ENCODE measurements at regions of chr15 and their contacts with region 1.

Region 1: DNA sequence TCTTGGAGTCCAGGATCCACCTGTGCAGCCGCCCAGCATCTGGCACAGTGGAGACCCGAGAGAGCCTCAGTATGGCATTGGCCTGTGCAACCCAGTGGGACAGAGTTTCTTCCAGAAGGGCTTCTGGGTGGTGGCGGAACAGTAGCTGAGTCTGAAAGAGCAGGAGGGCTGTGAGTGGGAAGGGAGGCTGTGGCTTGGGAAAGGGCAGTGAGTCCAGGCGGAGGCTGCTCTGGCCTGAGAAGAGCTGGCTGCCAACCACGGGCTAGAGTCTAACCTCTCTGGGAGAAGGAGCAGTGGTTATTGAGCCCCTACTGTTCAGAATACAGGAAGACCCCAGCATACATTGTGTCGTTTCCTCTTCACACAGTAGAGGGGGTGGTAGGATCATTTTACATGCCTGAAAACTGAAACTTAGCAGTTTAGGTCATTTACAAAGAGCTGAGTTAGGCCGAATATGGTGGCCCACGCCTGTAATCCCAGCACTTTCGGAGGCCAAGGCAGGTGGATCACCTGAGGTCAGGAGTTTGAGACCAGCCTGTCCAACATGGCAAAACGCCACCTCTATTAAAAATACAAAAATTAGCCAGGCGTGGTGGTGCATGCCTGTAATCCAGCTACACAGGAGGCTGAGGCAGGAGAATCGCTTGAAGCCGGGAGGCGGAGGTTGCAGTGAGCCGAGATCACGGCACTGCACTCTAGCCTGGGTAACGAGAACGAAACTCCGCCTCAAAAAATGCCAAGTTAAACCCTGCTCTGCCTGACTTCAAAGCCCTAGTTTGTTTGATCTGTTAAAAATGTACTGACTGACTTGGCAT is 3.2 kb downstream of the AEN start:
- DNase-seq: peak; percentile 68
- H3K4me3 Mint-ChIP-seq: peak overlapping the region; percentile 91
- H3K27ac Mint-ChIP-seq: peak overlapping the region; percentile 95
- H3K4me1 Mint-ChIP-seq: peaks cover 82% of the 10 kb centered on the region
- H3K27me3 Mint-ChIP-seq: peaks cover 4% of the 10 kb centered on the region

Region 2: GRCh38 chr15:88635318-88635717 is 11.0 kb after region 1 on chr15:
- CTCF ChIA-PET with region 1: interaction called, 23 read pairs
- DNase-seq: peak; percentile 62
- H3K4me3 Mint-ChIP-seq: peak overlapping the region; percentile 74
- H3K27ac Mint-ChIP-seq: peak overlapping the region; percentile 91
- H3K4me1 Mint-ChIP-seq: peaks cover 91% of the 10 kb centered on the region
- H3K27me3 Mint-ChIP-seq: no peaks in the 10 kb centered on the region

Region 3: DNA sequence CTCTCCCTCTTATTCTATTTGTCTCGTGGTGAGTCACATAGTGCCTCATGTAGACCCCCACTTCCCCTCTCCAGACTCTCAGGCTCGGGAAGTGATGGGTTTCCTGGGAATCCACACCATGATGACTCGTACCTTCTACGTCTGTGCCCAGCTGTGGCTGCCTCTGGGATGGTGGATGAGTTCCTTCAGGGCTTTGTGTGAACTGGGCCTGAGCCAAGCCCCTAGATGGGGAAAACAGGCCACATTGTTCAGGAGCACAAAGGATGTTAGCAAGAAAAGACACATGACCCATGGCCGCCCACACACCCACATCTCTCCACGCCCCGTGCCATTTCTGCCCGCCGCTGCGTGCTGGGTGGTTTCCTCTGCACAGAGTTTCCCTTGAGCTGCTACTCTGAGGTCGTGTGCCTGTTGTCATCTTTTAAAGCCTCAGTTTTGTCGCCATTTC is 24.9 kb after region 1 on chr15:
- CTCF ChIA-PET with region 1: interaction called, 14 read pairs
- DNase-seq: peak; percentile 72
- H3K4me3 Mint-ChIP-seq: peak overlapping the region; percentile 35
- H3K27ac Mint-ChIP-seq: peak overlapping the region; percentile 90
- H3K4me1 Mint-ChIP-seq: peaks cover 72% of the 10 kb centered on the region
- H3K27me3 Mint-ChIP-seq: no peaks in the 10 kb centered on the region

Region 4: GRCh38 chr15:88658972-88659931 is 34.9 kb after region 1 on chr15:
- CTCF ChIA-PET with region 1: interaction called, 39 read pairs
- DNase-seq: no peak
- H3K4me3 Mint-ChIP-seq: no peak overlapping the region
- H3K27ac Mint-ChIP-seq: no peak overlapping the region
- H3K4me1 Mint-ChIP-seq: peaks cover 25% of the 10 kb centered on the region
- H3K27me3 Mint-ChIP-seq: no peaks in the 10 kb centered on the region

Region 5: DNA sequence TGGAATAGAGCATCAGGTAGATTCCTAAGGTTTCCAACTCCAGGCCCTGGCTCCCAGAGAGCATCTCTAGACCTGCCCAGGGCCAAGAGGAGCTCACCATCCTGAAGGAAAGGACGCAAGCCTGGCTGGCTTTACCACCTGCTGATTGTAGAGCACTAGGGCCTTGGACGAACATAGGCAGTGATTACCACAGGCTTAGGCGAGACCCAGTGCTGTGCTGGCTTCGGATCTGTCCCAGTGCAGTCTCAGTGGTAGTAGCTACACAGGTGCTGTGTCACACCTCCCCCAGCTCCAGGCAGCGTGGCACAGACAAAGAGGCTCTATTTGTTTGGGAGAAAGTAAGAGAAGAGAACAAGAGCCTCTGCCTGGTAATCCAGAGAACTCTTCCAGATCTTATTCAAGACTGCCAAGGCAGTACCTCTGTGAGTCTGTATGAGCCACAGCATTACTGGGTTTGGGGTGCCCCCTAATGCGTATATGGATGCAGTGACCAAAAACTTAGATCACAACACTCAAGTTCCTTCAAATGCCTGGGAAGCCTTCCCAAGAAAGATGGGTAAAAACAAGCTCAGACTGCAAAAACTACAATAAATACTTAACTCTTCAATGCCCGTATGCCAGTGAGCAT is 39.9 kb after region 1 on chr15:
- CTCF ChIA-PET with region 1: interaction called, 39 read pairs
- DNase-seq: peak; percentile 72
- H3K4me3 Mint-ChIP-seq: no peak overlapping the region
- H3K27ac Mint-ChIP-seq: no peak overlapping the region
- H3K4me1 Mint-ChIP-seq: peaks cover 5% of the 10 kb centered on the region
- H3K27me3 Mint-ChIP-seq: peaks cover 10% of the 10 kb centered on the region

Region 6: DNA sequence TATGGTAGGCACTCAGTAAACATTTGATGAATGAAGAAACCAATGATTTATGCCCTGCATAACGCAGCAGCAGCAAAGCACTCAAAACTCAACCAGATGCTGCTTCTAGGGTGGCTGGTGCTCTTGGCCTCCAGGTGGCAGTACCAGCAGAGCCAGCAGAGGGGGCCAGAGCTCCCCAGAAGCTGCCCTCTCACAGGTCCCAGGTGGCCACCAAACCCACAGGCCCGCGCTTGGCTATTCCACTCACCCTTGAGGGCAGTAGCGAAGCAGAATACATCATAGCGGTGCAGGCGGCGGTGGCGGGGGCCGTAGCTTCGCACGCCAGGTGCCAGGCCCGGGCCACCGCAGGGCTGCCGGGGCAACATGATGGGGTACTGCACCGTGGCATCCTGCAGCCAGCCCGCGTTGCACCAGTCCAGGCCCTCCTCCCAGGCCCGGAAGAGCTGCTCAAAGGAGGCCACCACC is 254.4 kb after region 1 on chr15:
- CTCF ChIA-PET with region 1: interaction called, 14 read pairs
- DNase-seq: peak; percentile 69
- H3K4me3 Mint-ChIP-seq: no peak overlapping the region
- H3K27ac Mint-ChIP-seq: no peak overlapping the region
- H3K4me1 Mint-ChIP-seq: no peaks in the 10 kb centered on the region
- H3K27me3 Mint-ChIP-seq: no peaks in the 10 kb centered on the region

Region 7: GRCh38 chr15:88904624-88905327 is 280.4 kb after region 1 on chr15:
- CTCF ChIA-PET with region 1: interaction called, 12 read pairs
- DNase-seq: peak; percentile 98
- H3K4me3 Mint-ChIP-seq: peak overlapping the region; percentile 42
- H3K27ac Mint-ChIP-seq: peak overlapping the region; percentile 94
- H3K4me1 Mint-ChIP-seq: peaks cover 43% of the 10 kb centered on the region
- H3K27me3 Mint-ChIP-seq: no peaks in the 10 kb centered on the region